Colonic mucosa (tissue), 4 donors: ENCODE measurements at regions of chr12 and their contacts with region 1.

Region 1: GRCh38 chr12:115916910-115917668 is 360.4 kb downstream of the MED13L start:
- DNase-seq: peak; percentile 78
- H3K4me3 ChIP-seq: no peak overlapping the region
- H3K27ac ChIP-seq: no peak overlapping the region
- H3K4me1 ChIP-seq: no peaks in the 10 kb centered on the region
- H3K27me3 ChIP-seq: peaks cover 6% of the 10 kb centered on the region
- CTCF ChIP-seq: peak; percentile 91

Region 2: DNA sequence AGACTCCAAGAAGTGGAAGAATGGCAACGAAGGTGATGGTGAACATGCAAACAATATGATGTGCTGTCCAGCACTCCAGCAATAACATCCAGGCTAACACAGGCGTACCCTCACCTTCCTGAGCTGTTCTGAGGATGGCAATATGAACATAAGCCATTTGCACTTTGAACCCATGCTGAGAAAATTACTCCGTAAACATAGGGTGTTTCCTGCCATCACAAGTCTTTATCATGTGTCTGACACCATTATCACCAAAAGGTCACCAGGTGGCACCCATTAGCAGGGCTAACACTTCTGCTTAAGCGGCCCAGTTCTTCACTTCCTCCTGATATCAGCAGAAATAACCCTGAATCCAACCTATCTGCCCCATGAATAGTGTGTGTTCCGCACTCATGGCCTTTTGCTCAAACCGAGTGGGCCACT is 122.4 kb before region 1 on chr12:
- intact Hi-C with region 1: loop called (anchors 5 kb)
- DNase-seq: peak; percentile 49
- H3K4me3 ChIP-seq: no peak overlapping the region
- H3K27ac ChIP-seq: no peak overlapping the region
- H3K4me1 ChIP-seq: no peaks in the 10 kb centered on the region
- H3K27me3 ChIP-seq: no peaks in the 10 kb centered on the region
- CTCF ChIP-seq: no peak

Region 3: GRCh38 chr12:115866909-115867525 is 50.1 kb before region 1 on chr12:
- intact Hi-C with region 1: loop called (anchors 5 kb)
- DNase-seq: peak; percentile 36
- H3K4me3 ChIP-seq: no peak overlapping the region
- H3K27ac ChIP-seq: no peak overlapping the region
- H3K4me1 ChIP-seq: no peaks in the 10 kb centered on the region
- H3K27me3 ChIP-seq: no peaks in the 10 kb centered on the region
- CTCF ChIP-seq: no peak